B cell (primary cell): ENCODE measurements at regions of chr3 and their contacts with region 1.

Region 1: GRCh38 chr3:167350245-167350862 is 29.7 kb downstream of the ZBBX start:
- DNase-seq: no peak
- ATAC-seq: no peak
- H3K4me3 ChIP-seq: no peak overlapping the region
- H3K4me3 Mint-ChIP-seq: no peak overlapping the region
- H3K27ac ChIP-seq: no peak overlapping the region
- H3K27ac Mint-ChIP-seq: no peak overlapping the region
- H3K4me1 ChIP-seq: no peaks in the 10 kb centered on the region
- H3K4me1 Mint-ChIP-seq: no peaks in the 10 kb centered on the region
- H3K27me3 ChIP-seq: peaks cover 0 to 6% (median 0%) of the 10 kb centered on the region in 4 experiments
- H3K27me3 Mint-ChIP-seq: no peaks in the 10 kb centered on the region
- CTCF ChIP-seq: no peak

Region 2: GRCh38 chr3:165854696-165855095 is 1495.7 kb before region 1 on chr3:
- CTCF ChIA-PET with region 1: no interaction called
- POLR2A ChIA-PET with region 1: no interaction called
- intact Hi-C with region 1: loop called (anchors 5 kb)
- DNase-seq: peak; percentile 5
- ATAC-seq: no peak
- H3K4me3 ChIP-seq: no peak overlapping the region
- H3K4me3 Mint-ChIP-seq: no peak overlapping the region
- H3K27ac ChIP-seq: no peak overlapping the region
- H3K27ac Mint-ChIP-seq: no peak overlapping the region
- H3K4me1 ChIP-seq: no peaks in the 10 kb centered on the region
- H3K4me1 Mint-ChIP-seq: no peaks in the 10 kb centered on the region
- H3K27me3 ChIP-seq: no peaks in the 10 kb centered on the region
- H3K27me3 Mint-ChIP-seq: no peaks in the 10 kb centered on the region
- CTCF ChIP-seq: peak; percentile 69

Region 3: GRCh38 chr3:166962911-166963310 is 387.4 kb before region 1 on chr3:
- CTCF ChIA-PET with region 1: no interaction called
- POLR2A ChIA-PET with region 1: no interaction called
- intact Hi-C with region 1: no loop called
- DNase-seq: no peak
- ATAC-seq: no peak
- H3K4me3 ChIP-seq: no peak overlapping the region
- H3K4me3 Mint-ChIP-seq: no peak overlapping the region
- H3K27ac ChIP-seq: no peak overlapping the region
- H3K27ac Mint-ChIP-seq: no peak overlapping the region
- H3K4me1 ChIP-seq: no peaks in the 10 kb centered on the region
- H3K4me1 Mint-ChIP-seq: no peaks in the 10 kb centered on the region
- H3K27me3 ChIP-seq: no peaks in the 10 kb centered on the region
- H3K27me3 Mint-ChIP-seq: no peaks in the 10 kb centered on the region
- CTCF ChIP-seq: no peak

Region 4: DNA sequence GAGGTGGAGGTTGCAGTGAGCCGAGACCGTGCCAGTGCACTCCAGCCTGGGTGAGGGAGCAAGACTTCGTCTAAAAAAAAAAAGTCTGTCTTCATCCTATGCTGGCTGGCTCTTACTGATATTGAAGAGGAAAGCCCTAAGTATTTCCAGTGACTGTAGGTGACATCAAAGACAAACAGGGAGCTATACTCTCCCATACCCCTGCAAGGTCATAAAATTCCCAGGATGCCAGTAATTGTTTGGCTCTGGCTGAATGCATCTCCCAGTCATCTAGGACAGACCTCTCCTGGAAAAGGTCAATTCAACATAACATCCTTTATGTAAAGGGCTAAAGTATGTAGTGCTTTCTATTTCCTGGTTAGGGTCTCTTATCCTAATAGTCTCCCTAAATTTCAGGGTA is 21.8 kb after region 1 on chr3:
- CTCF ChIA-PET with region 1: no interaction called
- POLR2A ChIA-PET with region 1: no interaction called
- intact Hi-C with region 1: no loop called
- DNase-seq: no peak
- ATAC-seq: no peak
- H3K4me3 ChIP-seq: no peak overlapping the region
- H3K4me3 Mint-ChIP-seq: no peak overlapping the region
- H3K27ac ChIP-seq: no peak overlapping the region
- H3K27ac Mint-ChIP-seq: no peak overlapping the region
- H3K4me1 ChIP-seq: no peaks in the 10 kb centered on the region
- H3K4me1 Mint-ChIP-seq: no peaks in the 10 kb centered on the region
- H3K27me3 ChIP-seq: no peaks in the 10 kb centered on the region
- H3K27me3 Mint-ChIP-seq: no peaks in the 10 kb centered on the region
- CTCF ChIP-seq: no peak

Region 5: GRCh38 chr3:167559924-167560323 is 209.6 kb after region 1 on chr3:
- CTCF ChIA-PET with region 1: no interaction called
- POLR2A ChIA-PET with region 1: no interaction called
- intact Hi-C with region 1: no loop called
- DNase-seq: no peak
- ATAC-seq: no peak
- H3K4me3 ChIP-seq: no peak overlapping the region
- H3K4me3 Mint-ChIP-seq: no peak overlapping the region
- H3K27ac ChIP-seq: no peak overlapping the region
- H3K27ac Mint-ChIP-seq: no peak overlapping the region
- H3K4me1 ChIP-seq: no peaks in the 10 kb centered on the region
- H3K4me1 Mint-ChIP-seq: no peaks in the 10 kb centered on the region
- H3K27me3 ChIP-seq: no peaks in the 10 kb centered on the region
- H3K27me3 Mint-ChIP-seq: no peaks in the 10 kb centered on the region
- CTCF ChIP-seq: no peak